ENCODE measurements at regions of chr16 and their contacts with region 1.

Region 1: DNA sequence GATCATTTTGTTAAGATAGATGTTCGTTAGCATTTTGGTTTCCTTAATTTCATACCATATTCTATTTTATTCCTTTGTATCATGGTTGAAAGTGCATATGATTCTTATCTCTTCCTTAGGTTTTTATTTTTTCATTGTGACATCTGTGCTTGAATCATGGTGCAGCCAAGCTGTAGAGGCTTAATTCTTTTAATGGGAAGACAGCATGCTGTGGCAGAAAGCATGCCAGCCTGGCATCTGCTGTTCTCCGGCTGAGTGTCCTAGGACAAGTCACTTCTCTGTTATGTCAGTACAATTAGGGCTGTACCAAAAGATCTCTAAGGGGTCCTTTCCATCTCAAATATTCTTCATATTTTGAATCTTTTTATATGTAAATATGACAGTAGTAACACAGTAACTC is 68.5 kb upstream of the PMFBP1 start:
- DNase-seq: no peak
- H3K4me3 Mint-ChIP-seq: no peak overlapping the region
- H3K27ac Mint-ChIP-seq: no peak overlapping the region
- H3K4me1 Mint-ChIP-seq: no peaks in the 10 kb centered on the region
- H3K27me3 Mint-ChIP-seq: peaks cover 3% of the 10 kb centered on the region

Region 2: GRCh38 chr16:72060405-72060804 is 180.1 kb before region 1 on chr16:
- CTCF ChIA-PET with region 1: no interaction called
- intact Hi-C with region 1: no loop called
- DNase-seq: no peak
- H3K4me3 Mint-ChIP-seq: no peak overlapping the region
- H3K27ac Mint-ChIP-seq: no peak overlapping the region
- H3K4me1 Mint-ChIP-seq: no peaks in the 10 kb centered on the region
- H3K27me3 Mint-ChIP-seq: no peaks in the 10 kb centered on the region

Region 3: GRCh38 chr16:72270531-72270930 is 30.1 kb after region 1 on chr16:
- CTCF ChIA-PET with region 1: no interaction called
- intact Hi-C with region 1: no loop called
- DNase-seq: no peak
- H3K4me3 Mint-ChIP-seq: no peak overlapping the region
- H3K27ac Mint-ChIP-seq: no peak overlapping the region
- H3K4me1 Mint-ChIP-seq: no peaks in the 10 kb centered on the region
- H3K27me3 Mint-ChIP-seq: no peaks in the 10 kb centered on the region

Region 4: GRCh38 chr16:72285728-72286127 is 45.3 kb after region 1 on chr16:
- CTCF ChIA-PET with region 1: no interaction called
- intact Hi-C with region 1: no loop called
- DNase-seq: no peak
- H3K4me3 Mint-ChIP-seq: no peak overlapping the region
- H3K27ac Mint-ChIP-seq: no peak overlapping the region
- H3K4me1 Mint-ChIP-seq: no peaks in the 10 kb centered on the region
- H3K27me3 Mint-ChIP-seq: no peaks in the 10 kb centered on the region

Region 5: GRCh38 chr16:72467157-72467759 is 226.8 kb after region 1 on chr16:
- CTCF ChIA-PET with region 1: no interaction called
- intact Hi-C with region 1: loop called (anchors 1 kb)
- DNase-seq: no peak
- H3K4me3 Mint-ChIP-seq: no peak overlapping the region
- H3K27ac Mint-ChIP-seq: no peak overlapping the region
- H3K4me1 Mint-ChIP-seq: no peaks in the 10 kb centered on the region
- H3K27me3 Mint-ChIP-seq: no peaks in the 10 kb centered on the region

Measured in activated naive CD4-positive, alpha-beta T cell treated with anti-CD3 and anti-CD28 coated beads for 36 hours (primary cell).